Dorsolateral prefrontal cortex (tissue), 120 donors: ENCODE measurements at regions of chr2 and their contacts with region 1.

Region 1: GRCh38 chr2:38750891-38751595 is at the start of gene SRSF7:
- DNase-seq: peak; percentile 94 to 97 (median 96)
- H3K4me3 ChIP-seq: peak within 1 kb of the TSS; percentile 53 to 99 (median 91)
- H3K27ac ChIP-seq: peak within 1 kb of the TSS; percentile 89 to 100 (median 99)
- H3K27me3 ChIP-seq: no peaks in the 10 kb centered on the region
- CTCF ChIP-seq: peak in 22 of 56 donors; percentile 1 to 49 (median 14)
- total RNA-seq, gene SRSF7: 66.9 to 135 (median 93.8) TPM

Region 2: DNA sequence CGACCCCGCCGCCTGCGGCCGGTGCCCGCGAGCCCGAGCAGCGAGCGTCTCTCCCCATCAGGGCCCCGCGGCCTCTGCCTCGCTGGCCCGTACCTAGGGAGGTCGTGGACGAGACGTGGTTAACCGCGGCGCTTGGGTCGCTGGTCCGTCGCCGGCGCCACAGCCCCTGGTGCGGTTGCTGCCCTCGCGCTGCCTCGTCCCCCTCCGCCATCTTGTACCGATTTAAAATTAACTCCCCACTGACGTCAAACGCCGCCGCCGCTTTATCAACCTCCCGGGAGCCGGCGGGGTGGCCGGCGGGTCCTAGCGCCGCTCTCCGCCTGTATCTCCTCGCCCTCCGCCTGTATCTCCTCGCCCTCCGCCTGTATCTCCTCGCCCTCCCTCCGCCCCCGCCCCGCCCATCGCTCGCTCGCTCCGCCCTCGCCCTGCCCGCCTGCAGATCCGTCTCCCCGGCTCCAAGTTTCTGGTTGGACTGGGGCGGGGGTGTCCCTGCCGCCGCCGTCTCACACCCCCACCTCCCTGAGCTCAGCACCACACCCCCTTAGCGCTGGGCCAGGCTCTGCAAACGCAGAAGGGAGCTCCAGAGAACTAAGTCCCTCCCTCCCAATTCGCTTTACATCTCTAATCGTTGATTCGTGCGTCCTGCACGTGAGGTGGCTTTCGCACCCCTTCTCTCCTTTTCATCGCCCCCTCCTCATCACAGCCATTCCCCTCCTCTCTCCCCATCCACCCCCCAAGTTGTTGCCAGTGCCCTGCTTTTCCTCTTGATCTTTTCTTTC is 373.8 kb before region 1 on chr2 and contains the start of gene ATL2:
- intact Hi-C with region 1: loop called in 1 of 2 experiments (anchors 2 kb)
- DNase-seq: peak; percentile 89 to 96 (median 95)
- H3K4me3 ChIP-seq: peak within 1 kb of the TSS; percentile 78 to 98 (median 90)
- H3K27ac ChIP-seq: peak within 1 kb of the TSS; percentile 65 to 98 (median 93)
- H3K27me3 ChIP-seq: no peaks in the 10 kb centered on the region
- CTCF ChIP-seq: peak in 11 of 56 donors; percentile 9 to 46 (median 20)
- total RNA-seq, gene ATL2: 36.1 to 104 (median 69.2) TPM

Region 3: DNA sequence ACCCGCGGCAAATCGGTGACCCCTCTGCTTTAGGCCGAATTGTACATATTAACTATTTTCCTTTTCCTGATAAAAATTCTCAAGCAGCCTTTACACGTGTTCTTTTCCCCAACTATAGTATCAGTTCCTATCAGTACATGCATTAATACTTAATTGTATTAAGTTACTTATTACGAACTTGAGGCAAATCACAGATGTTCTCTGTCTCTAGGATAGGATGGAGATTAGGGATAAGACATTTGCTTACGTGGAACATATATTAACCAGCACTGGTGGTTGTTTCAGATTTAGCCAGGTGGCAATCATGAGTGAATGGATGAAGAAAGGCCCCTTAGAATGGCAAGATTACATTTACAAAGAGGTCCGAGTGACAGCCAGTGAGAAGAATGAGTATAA is 27.6 kb after region 1 on chr2:
- intact Hi-C with region 1: loop called (anchors 2 kb)
- DNase-seq: no peak
- H3K4me3 ChIP-seq: peak overlapping the region; percentile 41 to 99 (median 80)
- H3K27ac ChIP-seq: peak overlapping the region in 27 of 59 donors; percentile 18 to 87 (median 72)
- H3K27me3 ChIP-seq: no peaks in the 10 kb centered on the region
- CTCF ChIP-seq: no peak